GM12878 (cell line): ENCODE measurements at regions of chr14 and their contacts with region 1.

Region 1: DNA sequence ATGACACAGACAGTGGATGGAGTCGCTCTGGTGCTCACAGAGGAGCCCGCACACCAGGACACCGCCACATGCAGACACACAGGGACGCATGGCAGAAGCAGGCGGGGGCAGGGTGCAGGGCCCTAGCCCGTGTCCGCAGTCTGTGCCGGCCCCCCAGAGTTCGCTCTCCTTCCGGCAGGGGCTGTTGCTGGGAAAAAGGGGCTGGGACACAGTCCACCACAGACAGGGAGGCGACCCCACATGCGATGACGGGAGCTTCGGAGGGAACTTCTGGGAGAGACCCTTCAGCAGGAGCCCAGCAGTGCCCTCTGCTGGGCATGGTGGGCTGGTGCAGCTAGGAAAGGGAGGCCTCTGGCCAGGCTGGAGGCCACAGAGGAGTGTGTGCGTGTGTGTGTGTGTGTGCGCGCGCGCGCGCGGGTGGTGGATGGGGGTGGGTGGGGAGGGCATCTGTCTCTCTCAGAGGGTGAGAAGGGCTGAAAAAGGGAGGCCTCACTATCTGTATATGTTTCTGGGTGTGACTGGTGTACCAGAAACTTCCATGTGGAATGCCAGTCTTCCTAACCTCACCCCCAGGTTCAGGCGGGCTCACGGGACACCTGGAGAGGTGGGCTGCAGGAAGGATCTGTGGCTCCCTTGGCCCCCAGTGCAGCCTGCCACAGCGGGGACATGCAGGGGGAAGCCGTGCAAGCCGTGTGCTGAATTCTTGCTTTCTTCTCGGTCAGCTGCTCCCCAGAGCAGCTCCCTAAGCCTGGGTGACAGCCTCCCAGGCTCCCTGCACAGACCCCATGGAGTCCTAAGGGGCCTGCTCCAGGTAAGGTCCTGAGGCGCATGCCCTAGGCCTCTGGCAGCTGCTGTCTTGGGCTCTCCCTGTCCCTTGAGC is 60.7 kb downstream of the PLEKHG3 start:
- DNase-seq: no peak
- ATAC-seq: peak; percentile 81
- H3K4me3 ChIP-seq: no peak overlapping the region
- H3K27ac ChIP-seq: no peak overlapping the region
- H3K4me1 ChIP-seq: no peaks in the 10 kb centered on the region
- H3K27me3 ChIP-seq: no peaks in the 10 kb centered on the region; a peak in 1 of 4 replicates
- CTCF ChIP-seq: peak; percentile 81 to 96 (median 85)
- EP300 ChIP-seq: no peak
- POLR2A ChIP-seq: no peak
- RAD21 ChIP-seq: peak; percentile 61

Region 2: GRCh38 chr14:64540208-64541157 is 224.4 kb before region 1 on chr14 and contains the start of gene HSPA2:
- CTCF ChIA-PET with region 1: interaction called, 3 read pairs
- POLR2A ChIA-PET with region 1: no interaction called
- RAD21 ChIA-PET with region 1: interaction called, 6 read pairs
- SMC1A ChIA-PET with region 1: interaction called, 3 read pairs
- in situ Hi-C with region 1: no loop called
- intact Hi-C with region 1: loop called (anchors 5 kb)
- DNase-seq: peak; percentile 89
- ATAC-seq: peak; percentile 98
- H3K4me3 ChIP-seq: peak within 1 kb of the TSS; percentile 85
- H3K27ac ChIP-seq: peak within 1 kb of the TSS; percentile 8; the same call in 1 of the 2 replicates
- H3K4me1 ChIP-seq: peaks cover 4% of the 10 kb centered on the region; the same call in 1 of the 2 replicates
- H3K27me3 ChIP-seq: peaks cover 6 to 9% of the 10 kb centered on the region in 2 experiments
- CTCF ChIP-seq: peak; percentile 69 to 84 (median 77)
- EP300 ChIP-seq: no peak
- POLR2A ChIP-seq: peak; percentile 90
- RAD21 ChIP-seq: 0 out of 2 replicates have a peak, but pooled peaks have one; percentile 32
- polyA plus RNA-seq, gene HSPA2: 0.02 to 0.03 TPM

Region 3: DNA sequence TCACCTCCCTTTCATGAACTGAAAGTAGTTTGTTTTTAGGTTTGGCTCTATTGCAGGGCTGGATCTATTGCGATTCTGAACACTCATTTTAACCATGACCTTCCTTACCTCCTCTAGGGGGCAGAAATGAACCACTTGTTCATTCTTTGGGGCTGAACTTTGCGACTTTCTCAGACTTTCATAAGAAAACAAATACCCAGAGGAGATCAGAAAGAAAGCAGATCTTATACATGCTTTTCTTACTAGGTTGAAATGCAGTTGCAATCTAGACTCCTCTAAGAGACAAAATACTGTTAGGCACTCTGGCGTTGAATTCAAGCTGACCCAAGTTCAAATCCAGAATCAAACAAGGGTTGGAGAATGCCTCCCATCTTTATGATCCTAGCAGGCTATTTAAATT is 93.3 kb before region 1 on chr14:
- CTCF ChIA-PET with region 1: interaction called, 69 read pairs
- POLR2A ChIA-PET with region 1: no interaction called
- RAD21 ChIA-PET with region 1: interaction called, 19 read pairs
- SMC1A ChIA-PET with region 1: interaction called, 30 read pairs
- in situ Hi-C with region 1: loop called (anchors 5 kb)
- intact Hi-C with region 1: loop called (anchors 1 kb)
- DNase-seq: no peak
- ATAC-seq: peak; percentile 54
- H3K4me3 ChIP-seq: no peak overlapping the region
- H3K27ac ChIP-seq: no peak overlapping the region
- H3K4me1 ChIP-seq: peaks cover 6% of the 10 kb centered on the region
- H3K27me3 ChIP-seq: no peaks in the 10 kb centered on the region
- CTCF ChIP-seq: peak; percentile 63 to 66 (median 66)
- EP300 ChIP-seq: no peak
- POLR2A ChIP-seq: no peak
- RAD21 ChIP-seq: peak; percentile 70

Region 4: DNA sequence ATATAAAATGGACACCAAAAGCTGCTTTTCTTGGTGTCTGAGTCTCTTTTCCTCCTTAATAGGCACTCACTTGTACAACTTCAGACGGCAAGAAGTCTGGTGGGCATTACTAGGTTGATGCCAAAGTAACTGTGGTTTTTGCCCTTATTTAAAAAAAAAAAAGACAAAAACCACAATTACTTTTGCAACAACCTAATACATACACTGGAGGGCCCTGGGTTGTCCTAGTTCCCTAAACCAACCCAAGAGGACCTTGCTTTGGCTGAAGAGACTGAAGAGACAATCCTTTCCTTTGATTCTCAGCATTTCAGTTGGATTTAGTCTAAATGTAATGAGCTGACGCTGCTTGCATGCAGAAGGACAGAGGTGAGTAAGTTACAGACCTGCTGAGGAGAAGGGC is 76.8 kb before region 1 on chr14:
- CTCF ChIA-PET with region 1: no interaction called
- POLR2A ChIA-PET with region 1: no interaction called
- RAD21 ChIA-PET with region 1: no interaction called
- SMC1A ChIA-PET with region 1: no interaction called
- in situ Hi-C with region 1: no loop called
- intact Hi-C with region 1: no loop called
- DNase-seq: no peak
- ATAC-seq: no peak
- H3K4me3 ChIP-seq: no peak overlapping the region
- H3K27ac ChIP-seq: no peak overlapping the region
- H3K4me1 ChIP-seq: no peaks in the 10 kb centered on the region
- H3K27me3 ChIP-seq: no peaks in the 10 kb centered on the region
- CTCF ChIP-seq: no peak
- EP300 ChIP-seq: no peak
- POLR2A ChIP-seq: no peak
- RAD21 ChIP-seq: no peak

Region 5: DNA sequence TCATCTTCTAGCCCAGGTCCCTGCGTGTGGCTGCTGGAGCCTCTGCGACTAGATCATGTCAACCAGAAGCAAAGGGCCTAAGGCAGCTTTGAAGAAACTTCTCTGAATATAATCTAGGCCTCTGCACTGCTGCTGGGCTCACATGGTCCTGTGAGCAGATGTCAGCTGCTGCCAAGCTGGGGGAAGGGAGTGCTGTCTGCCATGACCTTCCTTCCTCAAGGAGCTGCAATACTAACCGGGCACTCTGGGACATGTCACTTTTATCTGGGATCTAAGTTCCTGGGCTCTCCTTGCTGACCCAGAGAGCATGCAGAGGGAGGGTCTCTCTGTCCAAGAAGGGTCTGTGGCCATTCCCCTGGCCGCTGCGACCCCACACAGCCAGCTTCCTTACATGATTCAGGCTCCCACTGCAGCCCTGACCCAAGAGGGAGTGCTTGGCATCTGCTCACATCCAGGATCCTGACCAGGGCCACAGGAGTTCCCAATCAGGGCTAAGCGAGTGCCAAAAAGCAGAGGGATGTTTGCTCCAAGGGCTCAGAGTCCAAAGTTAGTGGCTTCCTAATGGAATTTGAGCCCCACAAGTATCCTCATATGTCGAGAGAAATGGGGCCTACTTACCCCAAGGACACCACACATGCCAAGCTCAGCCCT is 13.3 kb after region 1 on chr14:
- CTCF ChIA-PET with region 1: interaction called, 15 read pairs
- POLR2A ChIA-PET with region 1: no interaction called
- RAD21 ChIA-PET with region 1: interaction called, 3 read pairs
- SMC1A ChIA-PET with region 1: interaction called, 3 read pairs
- in situ Hi-C with region 1: no loop called
- intact Hi-C with region 1: no loop called
- DNase-seq: no peak
- ATAC-seq: no peak
- H3K4me3 ChIP-seq: no peak overlapping the region
- H3K27ac ChIP-seq: no peak overlapping the region
- H3K4me1 ChIP-seq: no peaks in the 10 kb centered on the region
- H3K27me3 ChIP-seq: no peaks in the 10 kb centered on the region; a peak in 1 of 4 replicates
- CTCF ChIP-seq: no peak
- EP300 ChIP-seq: no peak
- POLR2A ChIP-seq: no peak
- RAD21 ChIP-seq: no peak